CD4-positive, alpha-beta T cell (primary cell): ENCODE measurements at regions of chr1 and their contacts with region 1.

Region 1: GRCh38 chr1:247078261-247079140 is at the start of gene ZNF670:
- DNase-seq: peak; percentile 51 to 92 (median 78)
- ATAC-seq: peak; percentile 99
- H3K4me3 ChIP-seq: peak within 1 kb of the TSS; percentile 84
- H3K4me3 Mint-ChIP-seq: peak within 1 kb of the TSS; percentile 93
- H3K27ac ChIP-seq: peak within 1 kb of the TSS in 1 of 2 donors; percentile 35
- H3K27ac Mint-ChIP-seq: peak within 1 kb of the TSS; percentile 71
- H3K4me1 ChIP-seq: peaks cover 16% of the 10 kb centered on the region
- H3K4me1 Mint-ChIP-seq: peaks cover 26% of the 10 kb centered on the region
- H3K27me3 ChIP-seq: no peaks in the 10 kb centered on the region
- H3K27me3 Mint-ChIP-seq: peaks cover 6% of the 10 kb centered on the region
- CTCF ChIP-seq: no peak
- total RNA-seq, gene ZNF670: 0.16 to 0.28 TPM

Region 2: GRCh38 chr1:247165674-247166073 is 87.2 kb after region 1 on chr1:
- CTCF ChIA-PET with region 1: no interaction called
- POLR2A ChIA-PET with region 1: no interaction called
- intact Hi-C with region 1: loop called in 1 of 2 experiments (anchors 5 kb)
- DNase-seq: no peak
- ATAC-seq: no peak
- H3K4me3 ChIP-seq: no peak overlapping the region
- H3K4me3 Mint-ChIP-seq: no peak overlapping the region
- H3K27ac ChIP-seq: no peak overlapping the region
- H3K27ac Mint-ChIP-seq: no peak overlapping the region
- H3K4me1 ChIP-seq: peaks cover 2% of the 10 kb centered on the region
- H3K4me1 Mint-ChIP-seq: peaks cover 47% of the 10 kb centered on the region
- H3K27me3 ChIP-seq: no peaks in the 10 kb centered on the region
- H3K27me3 Mint-ChIP-seq: no peaks in the 10 kb centered on the region
- CTCF ChIP-seq: no peak